Activated T-helper 1 cell treated with anti-CD3 and anti-CD28 coated beads, Interleukin-12 subunit alpha, Interleukin-12 subunit beta, Interleukin-2, Interleukin-4 antibody, amounts not matched to agents 30 ng/mL and 10 ng/mL and 1 ng/mL, durations not matched to agents 14 hours and 24 hours and 36 hours (primary cell): ENCODE measurements at regions of chr2 and their contacts with region 1.

Region 1: DNA sequence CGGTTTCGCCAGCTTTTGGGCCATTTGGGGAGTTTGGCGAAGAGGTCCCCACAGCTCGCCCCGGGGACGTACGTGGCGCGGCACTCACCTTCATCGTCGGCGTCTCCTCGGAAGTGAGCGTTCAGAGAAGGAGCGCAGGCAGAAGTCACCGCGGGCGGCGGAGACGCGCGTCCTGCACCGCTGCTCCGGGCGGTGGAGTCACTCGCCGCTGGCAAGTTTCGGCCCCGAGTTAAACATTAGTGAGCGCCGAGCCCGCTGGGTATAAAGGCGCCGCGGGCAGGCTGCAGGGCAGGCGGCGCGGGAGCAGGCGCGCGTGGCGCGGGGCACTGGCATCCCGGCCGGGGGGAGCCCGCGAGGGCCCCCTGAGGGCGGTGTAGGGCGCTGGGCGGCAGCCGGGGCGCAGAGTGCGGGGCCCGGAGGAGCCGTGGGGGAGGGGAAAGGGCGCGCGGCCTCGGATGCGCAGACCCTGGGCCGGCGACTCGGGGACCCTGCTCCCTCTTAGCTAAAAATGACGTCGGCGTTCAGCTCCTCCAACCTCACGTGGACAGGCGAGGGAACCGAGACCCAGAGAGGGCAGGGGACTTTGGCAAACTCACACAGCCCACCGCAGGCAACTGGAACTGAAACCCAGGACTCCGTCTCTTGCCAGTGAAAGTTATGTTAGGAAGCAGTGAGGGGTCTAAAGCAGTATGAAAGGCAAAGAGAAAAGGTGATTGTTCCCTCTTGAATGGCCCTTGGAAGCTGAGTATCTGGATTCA is at the start of gene DPP4:
- DNase-seq: peak; percentile 42
- H3K4me3 Mint-ChIP-seq: peak within 1 kb of the TSS; percentile 98
- H3K27ac Mint-ChIP-seq: peak within 1 kb of the TSS; percentile 93
- H3K4me1 Mint-ChIP-seq: peaks cover 55% of the 10 kb centered on the region
- H3K27me3 Mint-ChIP-seq: no peaks in the 10 kb centered on the region
- total RNA-seq, gene DPP4: 94.4 and 99.9 TPM in 2 replicates

Region 2: DNA sequence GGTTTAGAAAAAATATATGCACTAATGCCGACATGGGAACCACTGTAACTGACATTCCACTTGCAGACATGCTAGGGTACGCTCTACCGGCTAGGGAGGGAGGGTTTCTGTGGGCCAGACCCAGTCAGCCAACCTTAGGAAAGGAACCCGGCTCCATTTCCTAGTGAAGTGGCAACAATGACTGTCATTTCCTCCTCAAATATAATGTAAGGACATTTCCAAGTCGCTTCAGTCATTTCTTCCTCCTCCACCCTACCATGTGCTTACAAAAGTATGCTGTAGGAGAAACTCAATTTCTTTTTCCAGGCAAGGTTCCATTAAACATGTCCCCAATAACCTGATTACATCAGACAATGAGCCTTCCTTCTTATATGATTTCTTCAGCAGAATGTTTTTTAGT is 830.2 kb before region 1 on chr2:
- intact Hi-C with region 1: loop called (anchors 2 kb)
- DNase-seq: no peak
- H3K4me3 Mint-ChIP-seq: peak overlapping the region; percentile 87
- H3K27ac Mint-ChIP-seq: peak overlapping the region; percentile 96
- H3K4me1 Mint-ChIP-seq: peaks cover 65% of the 10 kb centered on the region
- H3K27me3 Mint-ChIP-seq: no peaks in the 10 kb centered on the region

Region 3: GRCh38 chr2:161992526-161992925 is 81.5 kb before region 1 on chr2:
- intact Hi-C with region 1: loop called (anchors 1 kb)
- DNase-seq: peak; percentile 61
- H3K4me3 Mint-ChIP-seq: peak overlapping the region; percentile 83
- H3K27ac Mint-ChIP-seq: peak overlapping the region; percentile 96
- H3K4me1 Mint-ChIP-seq: peaks cover 78% of the 10 kb centered on the region
- H3K27me3 Mint-ChIP-seq: no peaks in the 10 kb centered on the region

Region 4: DNA sequence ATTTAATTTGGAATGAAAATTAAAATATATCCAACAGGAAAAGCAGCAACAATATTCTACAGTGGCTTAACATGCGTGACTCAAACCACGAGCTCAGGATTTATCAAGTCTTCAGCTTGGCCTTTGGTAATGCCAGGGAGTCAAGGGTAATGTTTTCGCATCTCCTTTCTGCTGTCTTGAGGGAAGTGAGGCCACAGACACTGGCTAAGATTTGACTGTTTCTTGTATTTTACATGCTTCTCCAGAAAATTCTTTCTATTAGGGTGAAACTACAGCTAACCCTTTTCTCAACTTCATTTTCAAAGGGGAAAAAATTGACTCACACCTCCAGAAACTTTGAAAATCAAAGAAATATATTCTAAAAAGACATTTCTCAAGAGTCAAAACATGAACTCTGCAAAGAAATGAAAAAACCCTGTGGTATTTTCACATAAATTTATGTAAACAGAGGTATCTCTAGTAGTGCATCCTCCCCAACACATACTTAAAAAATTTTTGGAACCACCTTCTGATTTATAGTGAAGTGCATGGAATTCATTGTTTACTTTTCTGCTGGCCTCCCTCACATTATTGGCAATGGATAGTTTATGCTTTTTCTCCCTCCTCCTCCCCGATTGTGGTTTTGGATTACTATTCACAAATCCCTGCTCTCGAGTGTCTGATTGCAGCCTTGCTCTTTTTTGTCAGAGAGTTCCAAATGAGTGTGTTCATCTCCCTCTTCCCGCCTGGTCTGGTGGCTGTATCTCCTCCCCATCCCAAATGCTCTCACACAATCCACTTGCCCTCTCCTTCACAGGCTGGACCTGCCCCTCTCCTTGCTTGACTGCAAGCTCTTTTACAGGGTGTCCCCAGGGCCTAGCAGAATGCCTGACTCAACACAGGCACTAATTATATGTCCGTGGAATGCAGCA is 48.7 kb before region 1 on chr2:
- intact Hi-C with region 1: loop called (anchors 1 kb)
- DNase-seq: no peak
- H3K4me3 Mint-ChIP-seq: peak overlapping the region; percentile 52
- H3K27ac Mint-ChIP-seq: peak overlapping the region; percentile 70
- H3K4me1 Mint-ChIP-seq: peaks cover 74% of the 10 kb centered on the region
- H3K27me3 Mint-ChIP-seq: no peaks in the 10 kb centered on the region